A549 (cell line): ENCODE measurements at regions of chr7 and their contacts with region 1.

Region 1: DNA sequence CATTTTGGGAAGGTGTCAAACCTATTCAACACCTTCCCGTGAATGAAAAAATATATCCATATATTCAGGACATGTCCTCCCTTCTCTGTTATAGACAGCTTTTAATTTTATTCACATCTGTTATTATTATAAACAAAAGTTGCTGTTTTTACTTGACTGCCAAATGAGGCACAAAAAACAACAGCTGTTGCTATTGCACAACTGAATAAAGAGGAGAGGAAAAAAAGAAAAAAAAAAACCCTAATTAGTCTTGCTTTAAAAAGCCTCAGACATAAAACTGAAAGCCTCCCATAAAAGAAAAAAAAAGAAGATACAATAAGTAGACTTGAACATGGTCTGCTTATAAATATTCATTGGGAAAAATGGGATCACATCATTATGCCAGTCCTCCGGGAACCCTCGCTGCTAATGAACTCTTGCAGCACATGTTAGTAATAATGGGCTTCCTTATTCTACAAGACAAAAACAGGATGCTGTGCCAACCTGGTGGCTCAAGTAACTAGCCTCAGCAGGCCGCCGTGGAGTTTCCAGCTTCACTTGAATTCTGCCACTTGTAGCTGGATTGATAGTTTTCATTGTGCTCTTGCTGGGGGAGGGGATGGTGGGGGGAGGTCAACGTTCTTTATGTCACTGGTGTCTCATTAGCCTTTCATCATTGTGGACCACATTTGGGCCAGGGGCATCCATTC is 153.6 kb downstream of the BMPER start:
- DNase-seq: no peak
- ATAC-seq: no peak
- H3K4me3 ChIP-seq: no peak overlapping the region
- H3K27ac ChIP-seq: peak overlapping the region; percentile 92 to 97
- H3K4me1 ChIP-seq: peaks cover 72% of the 10 kb centered on the region
- CTCF ChIP-seq: no peak
- EP300 ChIP-seq: no peak
- POLR2A ChIP-seq: no peak
- RAD21 ChIP-seq: no peak

Region 2: GRCh38 chr7:34041707-34042106 is 17.2 kb before region 1 on chr7:
- CTCF ChIA-PET with region 1: interaction called, 10 read pairs
- POLR2A ChIA-PET with region 1: no interaction called
- DNase-seq: no peak
- ATAC-seq: no peak
- H3K4me3 ChIP-seq: no peak overlapping the region
- H3K27ac ChIP-seq: peak overlapping the region; percentile 87 to 88
- H3K4me1 ChIP-seq: peaks cover 46% of the 10 kb centered on the region
- CTCF ChIP-seq: no peak
- EP300 ChIP-seq: no peak
- POLR2A ChIP-seq: no peak
- RAD21 ChIP-seq: no peak